IMR-90 (cell line): ENCODE measurements at regions of chr5 and their contacts with region 1.

Region 1: GRCh38 chr5:87393331-87393730 is 19.4 kb downstream of the CCNH start:
- DNase-seq: peak; percentile 87
- ATAC-seq: peak; percentile 52
- H3K4me3 ChIP-seq: no peak overlapping the region
- H3K27ac ChIP-seq: peak overlapping the region; percentile 83
- H3K4me1 ChIP-seq: peaks cover 14% of the 10 kb centered on the region
- H3K27me3 ChIP-seq: no peaks in the 10 kb centered on the region
- CTCF ChIP-seq: no peak
- POLR2A ChIP-seq: no peak
- RAD21 ChIP-seq: no peak

Region 2: GRCh38 chr5:87121304-87122150 is 271.8 kb before region 1 on chr5:
- CTCF ChIA-PET with region 1: no interaction called
- POLR2A ChIA-PET with region 1: no interaction called
- dilution Hi-C with region 1: no loop called
- in situ Hi-C with region 1: no loop called
- intact Hi-C with region 1: loop called (anchors 5 kb)
- DNase-seq: peak; percentile 91
- ATAC-seq: peak; percentile 83
- H3K4me3 ChIP-seq: no peak overlapping the region
- H3K27ac ChIP-seq: peak overlapping the region; percentile 13; the same call in 1 of the 2 replicates
- H3K4me1 ChIP-seq: peaks cover 11% of the 10 kb centered on the region; the same call in 1 of the 2 replicates
- H3K27me3 ChIP-seq: no peaks in the 10 kb centered on the region
- CTCF ChIP-seq: no peak
- POLR2A ChIP-seq: no peak
- RAD21 ChIP-seq: no peak

Region 3: GRCh38 chr5:87412630-87413342 is 19.5 kb after region 1 on chr5 and contains the start of gene CCNH:
- CTCF ChIA-PET with region 1: no interaction called
- POLR2A ChIA-PET with region 1: no interaction called
- dilution Hi-C with region 1: no loop called
- in situ Hi-C with region 1: no loop called
- intact Hi-C with region 1: loop called (anchors 2 kb)
- DNase-seq: peak; percentile 98
- ATAC-seq: peak; percentile 100
- H3K4me3 ChIP-seq: peak within 1 kb of the TSS; percentile 81
- H3K27ac ChIP-seq: peak within 1 kb of the TSS; percentile 89
- H3K4me1 ChIP-seq: no peaks in the 10 kb centered on the region
- H3K27me3 ChIP-seq: no peaks in the 10 kb centered on the region
- CTCF ChIP-seq: no peak
- POLR2A ChIP-seq: peak; percentile 96
- RAD21 ChIP-seq: no peak
- total RNA-seq, gene CCNH: 97.8 and 100 TPM in 2 replicates